ENCODE measurements at regions of chr6 and their contacts with region 1.

Region 1: GRCh38 chr6:47477497-47478232 is at the start of gene CD2AP:
- DNase-seq: peak; percentile 86
- H3K4me3 Mint-ChIP-seq: peak within 1 kb of the TSS; percentile 100
- H3K27ac Mint-ChIP-seq: peak within 1 kb of the TSS; percentile 98
- H3K4me1 Mint-ChIP-seq: peaks cover 24% of the 10 kb centered on the region
- H3K27me3 Mint-ChIP-seq: no peaks in the 10 kb centered on the region
- total RNA-seq, gene CD2AP: 16.1 to 18.1 TPM

Region 2: GRCh38 chr6:46796848-46797580 is 680.7 kb before region 1 on chr6:
- CTCF ChIA-PET with region 1: no interaction called
- intact Hi-C with region 1: no loop called
- DNase-seq: no peak
- H3K4me3 Mint-ChIP-seq: no peak overlapping the region
- H3K27ac Mint-ChIP-seq: no peak overlapping the region
- H3K4me1 Mint-ChIP-seq: no peaks in the 10 kb centered on the region
- H3K27me3 Mint-ChIP-seq: peaks cover 2% of the 10 kb centered on the region

Region 3: GRCh38 chr6:46932526-46933319 is 544.9 kb before region 1 on chr6:
- CTCF ChIA-PET with region 1: no interaction called
- intact Hi-C with region 1: no loop called
- DNase-seq: no peak
- H3K4me3 Mint-ChIP-seq: no peak overlapping the region
- H3K27ac Mint-ChIP-seq: no peak overlapping the region
- H3K4me1 Mint-ChIP-seq: no peaks in the 10 kb centered on the region
- H3K27me3 Mint-ChIP-seq: peaks cover 11% of the 10 kb centered on the region

Region 4: DNA sequence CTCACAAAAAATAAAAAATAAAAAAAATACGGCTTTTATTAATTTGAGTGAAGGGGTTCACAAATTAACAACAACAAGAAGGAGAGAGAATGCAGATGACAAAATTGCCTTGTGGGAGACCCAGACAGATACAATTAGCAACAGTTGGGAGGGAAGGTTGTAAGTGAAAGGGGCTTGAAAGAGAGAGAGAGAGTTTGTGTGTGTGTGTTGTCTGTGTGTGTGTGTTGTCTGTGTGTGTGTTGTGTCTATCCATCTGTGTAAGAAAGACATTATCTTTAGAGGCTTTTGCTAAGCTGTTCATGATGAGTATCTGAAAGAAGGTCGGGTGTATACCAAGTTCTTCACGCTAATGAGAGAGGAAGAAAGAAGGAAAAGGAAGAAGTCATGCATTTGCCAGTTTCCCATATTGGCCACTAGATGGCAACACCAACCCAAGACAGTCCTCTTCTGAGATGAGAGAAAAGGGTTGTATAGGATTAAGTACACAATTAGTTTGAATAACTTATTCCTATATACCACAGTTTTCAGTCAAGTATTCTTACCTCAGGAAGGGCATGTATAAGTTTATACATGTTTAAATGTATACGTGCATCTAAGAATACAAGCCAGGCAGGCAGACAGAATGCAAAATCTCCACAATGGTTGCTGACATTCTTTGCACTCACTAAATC is 63.8 kb before region 1 on chr6:
- CTCF ChIA-PET with region 1: interaction called, 7 read pairs
- intact Hi-C with region 1: loop called (anchors 1 kb)
- DNase-seq: peak; percentile 55
- H3K4me3 Mint-ChIP-seq: peak overlapping the region; percentile 63
- H3K27ac Mint-ChIP-seq: peak overlapping the region; percentile 46
- H3K4me1 Mint-ChIP-seq: peaks cover 15% of the 10 kb centered on the region
- H3K27me3 Mint-ChIP-seq: no peaks in the 10 kb centered on the region

Region 5: GRCh38 chr6:47535316-47536225 is 57.9 kb after region 1 on chr6:
- CTCF ChIA-PET with region 1: no interaction called
- intact Hi-C with region 1: loop called (anchors 5 kb)
- DNase-seq: no peak
- H3K4me3 Mint-ChIP-seq: no peak overlapping the region
- H3K27ac Mint-ChIP-seq: peak overlapping the region; percentile 30
- H3K4me1 Mint-ChIP-seq: peaks cover 14% of the 10 kb centered on the region
- H3K27me3 Mint-ChIP-seq: no peaks in the 10 kb centered on the region

Region 6: DNA sequence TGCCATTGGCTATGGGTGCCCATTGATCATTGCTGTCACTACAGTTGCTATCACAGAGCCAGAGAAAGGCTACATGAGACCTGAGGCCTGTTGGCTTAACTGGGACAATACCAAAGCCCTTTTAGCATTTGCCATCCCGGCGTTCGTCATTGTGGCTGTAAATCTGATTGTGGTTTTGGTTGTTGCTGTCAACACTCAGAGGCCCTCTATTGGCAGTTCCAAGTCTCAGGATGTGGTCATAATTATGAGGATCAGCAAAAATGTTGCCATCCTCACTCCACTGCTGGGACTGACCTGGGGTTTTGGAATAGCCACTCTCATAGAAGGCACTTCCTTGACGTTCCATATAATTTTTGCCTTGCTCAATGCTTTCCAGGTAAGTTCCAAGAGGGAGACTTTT is 237.1 kb after region 1 on chr6:
- CTCF ChIA-PET with region 1: no interaction called
- intact Hi-C with region 1: loop called (anchors 5 kb)
- DNase-seq: peak; percentile 57
- H3K4me3 Mint-ChIP-seq: no peak overlapping the region
- H3K27ac Mint-ChIP-seq: no peak overlapping the region
- H3K4me1 Mint-ChIP-seq: peaks cover 28% of the 10 kb centered on the region
- H3K27me3 Mint-ChIP-seq: peaks cover 21% of the 10 kb centered on the region

Region 7: GRCh38 chr6:47780510-47781356 is 303.1 kb after region 1 on chr6:
- CTCF ChIA-PET with region 1: no interaction called
- intact Hi-C with region 1: loop called (anchors 5 kb)
- DNase-seq: peak; percentile 57
- H3K4me3 Mint-ChIP-seq: no peak overlapping the region
- H3K27ac Mint-ChIP-seq: no peak overlapping the region
- H3K4me1 Mint-ChIP-seq: peaks cover 5% of the 10 kb centered on the region
- H3K27me3 Mint-ChIP-seq: peaks cover 6% of the 10 kb centered on the region